ENCODE measurements at regions of chr11 and their contacts with region 1.

Region 1: GRCh38 chr11:313787-314547 is at the start of gene IFITM1:
- DNase-seq: peak; percentile 77
- H3K4me3 Mint-ChIP-seq: peak within 1 kb of the TSS; percentile 93
- H3K27ac Mint-ChIP-seq: peak within 1 kb of the TSS; percentile 95
- H3K4me1 Mint-ChIP-seq: peaks cover 22% of the 10 kb centered on the region
- H3K27me3 Mint-ChIP-seq: no peaks in the 10 kb centered on the region
- total RNA-seq, gene IFITM1: 359 to 378 TPM

Region 2: GRCh38 chr11:326842-327580 is 13.0 kb after region 1 on chr11:
- CTCF ChIA-PET with region 1: interaction called, 4 read pairs
- intact Hi-C with region 1: loop called (anchors 1 kb)
- DNase-seq: peak; percentile 92
- H3K4me3 Mint-ChIP-seq: peak overlapping the region; percentile 72
- H3K27ac Mint-ChIP-seq: peak overlapping the region; percentile 98
- H3K4me1 Mint-ChIP-seq: peaks cover 73% of the 10 kb centered on the region
- H3K27me3 Mint-ChIP-seq: no peaks in the 10 kb centered on the region

Measured in activated naive CD4-positive, alpha-beta T cell treated with anti-CD3 and anti-CD28 coated beads for 36 hours (primary cell).